Heart right ventricle (tissue), 16 donors: ENCODE measurements at regions of chr7 and their contacts with region 1.

Region 1: DNA sequence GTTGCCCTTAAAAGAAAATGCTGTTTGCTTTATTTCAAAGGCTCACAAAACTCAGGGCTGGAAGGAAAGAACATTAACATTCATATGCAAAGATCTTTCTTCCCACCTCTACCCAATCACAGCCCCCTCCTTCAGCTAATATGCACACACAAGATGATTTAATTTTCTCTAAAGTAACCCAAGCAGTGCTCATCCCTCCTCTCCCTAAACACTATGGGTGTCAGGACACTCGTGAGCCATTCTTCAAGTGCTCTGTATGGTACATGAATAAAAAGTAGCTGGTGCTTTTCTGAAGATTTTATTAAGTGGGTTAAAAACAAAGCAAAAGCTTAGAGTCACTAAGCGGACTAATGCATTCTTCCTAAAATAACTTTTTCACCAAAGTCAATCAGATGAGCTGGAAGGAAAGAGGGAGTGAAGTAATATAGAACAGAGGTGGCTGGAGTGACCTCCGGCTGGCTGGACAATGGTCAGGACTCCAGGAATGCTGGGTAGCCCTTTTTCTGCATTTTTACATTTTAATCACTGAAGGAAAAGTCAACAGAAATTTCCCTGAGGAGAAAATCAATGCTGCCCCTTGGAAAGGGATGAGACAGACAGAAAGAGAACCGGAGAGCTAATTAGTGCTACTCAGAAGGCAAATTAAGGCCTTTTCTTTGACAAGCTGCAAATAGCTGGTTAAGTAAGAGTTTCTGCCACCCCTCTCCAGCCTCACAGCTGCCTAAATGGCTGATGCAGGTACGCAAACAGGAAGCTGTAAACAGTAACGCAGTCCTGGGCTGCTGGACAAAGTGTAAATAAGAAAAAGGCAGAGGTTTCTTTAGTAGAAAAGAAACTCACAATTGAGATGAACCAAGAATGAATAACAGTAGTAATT is 6.6 kb downstream of the DGKI start:
- DNase-seq: no peak
- ATAC-seq: no peak
- H3K4me3 ChIP-seq: no peak overlapping the region
- H3K27ac ChIP-seq: no peak overlapping the region
- H3K4me1 ChIP-seq: no peaks in the 10 kb centered on the region
- H3K27me3 ChIP-seq: peaks cover 0 to 30% (median 14%) of the 10 kb centered on the region in 7 donors
- CTCF ChIP-seq: no peak

Region 2: DNA sequence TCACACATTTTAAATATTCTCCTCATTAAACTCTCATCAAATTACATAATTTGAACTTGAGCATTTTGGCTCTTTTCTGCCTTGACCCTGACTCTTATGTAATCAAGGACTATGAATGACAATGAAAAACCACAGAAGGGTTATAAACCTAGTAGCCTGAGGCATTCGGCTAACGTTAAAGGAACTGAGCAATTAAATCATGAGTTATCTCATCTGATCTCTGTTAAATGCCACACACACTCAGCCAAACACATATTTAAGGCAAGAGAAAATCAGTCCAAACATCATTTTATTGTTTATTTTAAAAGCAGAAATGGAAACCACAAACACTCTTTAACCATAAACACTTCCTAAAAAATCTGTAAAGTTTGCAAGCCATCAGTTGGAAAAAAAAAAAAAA is 197.7 kb before region 1 on chr7:
- intact Hi-C with region 1: loop called in 1 of 10 experiments (anchors 10 kb)
- DNase-seq: no peak
- ATAC-seq: no peak
- H3K4me3 ChIP-seq: no peak overlapping the region
- H3K27ac ChIP-seq: no peak overlapping the region
- H3K4me1 ChIP-seq: no peaks in the 10 kb centered on the region
- H3K27me3 ChIP-seq: peaks cover 0 to 4% (median 0%) of the 10 kb centered on the region in 7 donors
- CTCF ChIP-seq: no peak